ENCODE measurements at regions of chr4 and their contacts with region 1.

Region 1: GRCh38 chr4:113468165-113469022 is 293.1 kb downstream of the CAMK2D start:
- DNase-seq: peak; percentile 100
- H3K4me3 ChIP-seq: peak overlapping the region in 2 of 3 experiments; percentile 9 to 26
- H3K27ac ChIP-seq: peak overlapping the region; percentile 99
- H3K4me1 ChIP-seq: peaks cover 26% of the 10 kb centered on the region
- H3K27me3 ChIP-seq: no peaks in the 10 kb centered on the region
- CTCF ChIP-seq: no peak

Region 2: DNA sequence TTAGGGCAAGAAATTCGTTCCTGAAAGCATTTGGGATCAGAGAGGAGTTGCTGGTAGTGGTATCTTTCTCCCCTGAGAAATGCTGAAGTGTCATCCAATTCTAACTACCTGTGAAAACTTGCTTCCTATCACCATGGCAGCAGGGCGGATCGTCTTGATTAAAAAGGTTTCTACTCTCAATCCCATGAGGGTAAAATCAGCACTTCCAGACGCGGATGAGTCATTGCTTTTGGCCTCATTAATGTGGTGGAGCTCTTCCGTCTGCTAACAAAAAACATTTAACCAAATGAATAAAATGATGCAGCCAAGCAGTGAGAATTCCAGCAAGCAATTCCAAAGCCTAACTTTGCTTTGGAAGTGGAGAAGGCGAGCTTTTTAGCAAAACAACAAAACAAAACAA is 32.5 kb before region 1 on chr4:
- CTCF ChIA-PET with region 1: no interaction called
- dilution Hi-C with region 1: no loop called
- in situ Hi-C with region 1: no loop called
- intact Hi-C with region 1: loop called (anchors 2 kb)
- DNase-seq: peak; percentile 96
- H3K4me3 ChIP-seq: no peak overlapping the region
- H3K27ac ChIP-seq: peak overlapping the region; percentile 69
- H3K4me1 ChIP-seq: peaks cover 25% of the 10 kb centered on the region
- H3K27me3 ChIP-seq: no peaks in the 10 kb centered on the region
- CTCF ChIP-seq: no peak

Region 3: DNA sequence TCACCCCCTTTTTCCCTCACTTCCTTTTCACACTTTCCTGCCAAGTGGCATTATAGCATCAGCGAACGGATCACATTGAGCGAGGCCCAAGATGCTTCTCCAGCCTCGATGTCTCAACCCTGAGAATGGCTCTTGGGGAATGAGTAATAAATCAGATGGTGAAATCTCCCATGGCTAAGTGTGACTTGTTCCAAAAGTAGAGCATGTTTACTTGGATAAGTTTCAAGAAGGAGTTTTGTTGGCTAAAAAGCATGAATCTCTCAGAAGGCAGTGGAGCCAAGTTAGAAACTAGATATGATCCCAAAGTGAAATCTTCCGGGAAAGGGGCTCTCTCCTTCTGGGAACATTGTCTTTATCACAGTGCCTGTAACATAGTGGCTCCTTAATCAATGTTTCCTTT is 23.1 kb before region 1 on chr4:
- CTCF ChIA-PET with region 1: no interaction called
- dilution Hi-C with region 1: no loop called
- in situ Hi-C with region 1: no loop called
- intact Hi-C with region 1: loop called (anchors 1 kb)
- DNase-seq: peak; percentile 97
- H3K4me3 ChIP-seq: no peak overlapping the region
- H3K27ac ChIP-seq: peak overlapping the region; percentile 98
- H3K4me1 ChIP-seq: peaks cover 32% of the 10 kb centered on the region
- H3K27me3 ChIP-seq: no peaks in the 10 kb centered on the region
- CTCF ChIP-seq: no peak